ENCODE measurements at regions of chr4 and their contacts with region 1.

Region 1: DNA sequence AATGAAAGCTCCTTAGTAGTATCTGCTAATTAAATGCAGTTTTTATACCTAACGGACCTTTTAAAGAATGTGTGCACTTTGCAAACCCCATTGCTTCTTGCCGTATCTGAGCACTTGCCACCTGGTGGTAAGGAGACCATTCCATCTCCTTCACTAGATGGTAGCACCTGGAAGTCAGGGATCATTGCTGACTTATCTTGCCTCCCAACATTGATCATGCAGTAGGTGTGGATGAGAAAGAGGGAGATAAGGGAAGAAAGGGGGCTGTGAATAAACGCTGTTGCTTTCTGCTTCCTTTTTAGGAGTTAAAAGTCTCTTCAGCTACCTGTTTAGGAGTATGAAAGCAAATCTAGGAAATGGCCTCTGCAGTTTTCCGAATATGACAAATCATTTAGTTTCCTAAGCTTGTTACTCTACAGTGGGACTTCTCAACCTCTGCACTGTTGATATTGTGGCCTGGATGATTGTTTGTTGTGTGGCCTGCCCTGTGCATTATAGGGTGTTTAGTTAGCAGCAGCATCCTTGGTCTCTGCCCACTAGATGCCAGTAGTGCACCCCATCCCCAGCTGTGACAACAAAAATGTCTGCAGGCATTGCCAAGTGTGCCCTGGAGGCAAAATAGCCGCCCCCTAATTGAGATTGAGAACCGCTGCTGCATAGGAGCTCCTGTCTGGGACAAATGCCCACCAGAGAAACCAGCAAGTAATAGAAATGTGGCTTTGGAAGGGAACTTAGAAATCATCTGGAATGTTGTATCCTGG is 38.8 kb downstream of the GAB1 start:
- DNase-seq: peak; percentile 64
- ATAC-seq: peak; percentile 76
- H3K4me3 ChIP-seq: no peak overlapping the region
- H3K4me3 Mint-ChIP-seq: peak overlapping the region; percentile 32
- H3K27ac ChIP-seq: no peak overlapping the region
- H3K27ac Mint-ChIP-seq: peak overlapping the region; percentile 54
- H3K4me1 ChIP-seq: peaks cover 47 to 58% of the 10 kb centered on the region in 2 donors
- H3K4me1 Mint-ChIP-seq: peaks cover 61% of the 10 kb centered on the region
- H3K27me3 ChIP-seq: no peaks in the 10 kb centered on the region
- H3K27me3 Mint-ChIP-seq: no peaks in the 10 kb centered on the region
- CTCF ChIP-seq: peak; percentile 56

Region 2: DNA sequence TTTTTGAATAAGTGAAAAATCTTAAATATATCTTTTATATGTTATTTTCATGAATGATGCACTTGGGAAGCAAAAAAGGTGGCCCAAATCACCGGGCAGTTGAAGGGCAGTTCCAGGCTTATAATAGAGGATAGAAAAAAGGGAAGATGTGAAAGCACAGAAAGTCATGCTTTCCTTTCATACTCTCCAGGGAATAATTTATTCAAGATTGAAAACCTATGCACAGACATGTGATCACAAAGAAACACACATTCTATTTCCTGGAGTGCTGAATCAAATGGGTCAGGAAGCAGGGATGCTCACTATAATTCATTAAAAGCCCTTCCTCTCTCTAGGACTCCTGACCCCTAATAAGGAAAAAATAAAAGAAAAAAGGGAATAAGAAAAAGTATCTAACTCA is 256.8 kb before region 1 on chr4:
- CTCF ChIA-PET with region 1: no interaction called
- POLR2A ChIA-PET with region 1: no interaction called
- intact Hi-C with region 1: no loop called
- DNase-seq: no peak
- ATAC-seq: no peak
- H3K4me3 ChIP-seq: no peak overlapping the region
- H3K4me3 Mint-ChIP-seq: no peak overlapping the region
- H3K27ac ChIP-seq: no peak overlapping the region
- H3K27ac Mint-ChIP-seq: no peak overlapping the region
- H3K4me1 ChIP-seq: no peaks in the 10 kb centered on the region
- H3K4me1 Mint-ChIP-seq: no peaks in the 10 kb centered on the region
- H3K27me3 ChIP-seq: no peaks in the 10 kb centered on the region
- H3K27me3 Mint-ChIP-seq: peaks cover 4% of the 10 kb centered on the region
- CTCF ChIP-seq: no peak

Region 3: DNA sequence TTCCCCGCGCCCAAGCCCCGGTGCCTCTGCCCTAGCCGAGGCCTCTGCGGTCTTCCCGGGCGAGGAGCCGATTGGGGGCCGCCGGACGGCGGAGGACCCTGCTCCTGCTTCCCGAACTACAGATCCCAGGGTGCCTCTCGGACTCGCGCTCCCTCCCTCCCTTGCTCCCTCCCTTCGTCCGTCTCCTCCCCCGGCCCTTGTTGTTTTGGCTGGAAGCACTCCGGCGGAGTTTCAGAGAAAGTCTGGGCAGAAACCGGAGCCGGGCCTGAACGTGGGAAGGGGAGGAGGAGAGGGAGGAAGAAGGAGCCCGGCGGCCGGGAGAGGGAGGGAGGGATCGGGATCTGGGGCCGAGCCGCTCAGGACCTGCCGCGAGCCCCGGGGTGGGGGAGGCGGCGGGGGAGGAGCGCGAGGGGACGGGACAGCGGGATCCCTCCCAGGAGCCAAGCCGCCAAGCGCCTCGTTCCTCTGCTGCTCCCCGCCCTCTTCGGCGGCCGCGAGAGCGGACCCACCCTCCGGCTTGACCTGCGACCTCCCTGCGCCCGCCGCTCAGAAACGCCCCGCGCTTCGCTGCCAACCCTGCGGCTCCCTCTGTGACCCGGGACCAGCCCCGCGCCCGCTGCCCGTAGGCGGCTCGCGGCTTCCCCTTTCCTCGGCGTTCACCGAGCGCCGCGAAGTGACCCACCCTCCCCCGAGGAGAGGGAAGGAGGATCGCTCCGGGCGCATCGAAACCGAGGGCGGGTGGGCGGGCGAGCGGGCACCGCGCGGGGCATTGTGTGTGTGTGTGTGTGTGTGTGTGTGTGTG is 39.3 kb before region 1 on chr4:
- CTCF ChIA-PET with region 1: interaction called, 7 read pairs
- POLR2A ChIA-PET with region 1: interaction called, 6 read pairs
- intact Hi-C with region 1: loop called (anchors 5 kb)
- DNase-seq: peak; percentile 69
- ATAC-seq: peak; percentile 56
- H3K4me3 ChIP-seq: peak overlapping the region; percentile 42 to 86 (median 73)
- H3K4me3 Mint-ChIP-seq: peak overlapping the region; percentile 96
- H3K27ac ChIP-seq: peak overlapping the region; percentile 46 to 76
- H3K27ac Mint-ChIP-seq: peak overlapping the region; percentile 87
- H3K4me1 ChIP-seq: peaks cover 12 to 17% of the 10 kb centered on the region in 2 donors
- H3K4me1 Mint-ChIP-seq: peaks cover 24% of the 10 kb centered on the region
- H3K27me3 ChIP-seq: peaks cover 0 to 9% (median 0%) of the 10 kb centered on the region in 4 experiments
- H3K27me3 Mint-ChIP-seq: peaks cover 23% of the 10 kb centered on the region
- CTCF ChIP-seq: no peak

Region 4: GRCh38 chr4:143358923-143359643 is 16.4 kb before region 1 on chr4:
- CTCF ChIA-PET with region 1: interaction called, 22 read pairs
- POLR2A ChIA-PET with region 1: no interaction called
- intact Hi-C with region 1: loop called (anchors 2 kb)
- DNase-seq: peak; percentile 81
- ATAC-seq: peak; percentile 88
- H3K4me3 ChIP-seq: peak overlapping the region; percentile 2 to 43 (median 25)
- H3K4me3 Mint-ChIP-seq: peak overlapping the region; percentile 76
- H3K27ac ChIP-seq: peak overlapping the region; percentile 78 to 90
- H3K27ac Mint-ChIP-seq: peak overlapping the region; percentile 83
- H3K4me1 ChIP-seq: peaks cover 35 to 52% of the 10 kb centered on the region in 2 donors
- H3K4me1 Mint-ChIP-seq: peaks cover 51% of the 10 kb centered on the region
- H3K27me3 ChIP-seq: no peaks in the 10 kb centered on the region
- H3K27me3 Mint-ChIP-seq: no peaks in the 10 kb centered on the region
- CTCF ChIP-seq: no peak

Region 5: DNA sequence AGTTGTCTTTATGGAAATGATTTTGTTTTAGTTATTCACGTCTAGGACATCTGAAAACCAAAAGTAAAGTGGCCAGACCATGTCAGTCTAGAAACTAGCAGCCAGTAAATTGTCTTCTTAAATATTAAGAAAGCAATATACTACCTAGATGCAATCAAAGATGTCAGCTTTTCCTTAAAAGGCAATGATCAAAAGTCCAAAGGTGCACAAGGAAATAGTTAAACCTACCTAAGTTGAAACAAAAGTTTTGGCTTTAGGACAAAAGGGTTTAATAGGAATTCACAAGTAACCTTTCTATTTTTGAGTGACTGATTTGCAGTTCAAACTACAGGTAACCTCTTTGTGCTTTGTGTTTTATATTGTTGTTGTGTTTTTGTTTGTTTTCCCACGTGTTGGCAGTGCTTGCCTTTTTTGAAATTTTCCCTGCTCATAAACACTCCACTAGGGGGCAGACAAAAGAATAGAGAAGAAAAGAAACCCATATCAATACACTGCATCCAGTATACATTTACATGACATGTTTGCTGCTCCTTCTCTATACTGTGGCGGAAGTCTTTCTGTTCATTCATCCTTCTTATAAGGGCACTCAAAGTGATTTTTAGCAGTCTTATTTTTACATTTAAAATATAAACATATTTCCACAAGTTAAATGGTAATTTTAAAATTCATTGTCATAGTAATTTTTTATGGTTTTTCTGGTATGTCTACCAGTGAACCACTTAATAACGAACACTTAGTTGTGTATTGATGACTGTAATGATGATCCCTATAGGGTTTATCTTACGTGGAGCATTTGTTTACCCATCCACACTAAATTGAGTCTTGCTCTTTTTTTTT is 23.8 kb after region 1 on chr4:
- CTCF ChIA-PET with region 1: interaction called, 21 read pairs
- POLR2A ChIA-PET with region 1: no interaction called
- intact Hi-C with region 1: loop called (anchors 2 kb)
- DNase-seq: peak; percentile 60
- ATAC-seq: peak; percentile 43
- H3K4me3 ChIP-seq: no peak overlapping the region
- H3K4me3 Mint-ChIP-seq: no peak overlapping the region
- H3K27ac ChIP-seq: no peak overlapping the region
- H3K27ac Mint-ChIP-seq: no peak overlapping the region
- H3K4me1 ChIP-seq: peaks cover 15 to 23% of the 10 kb centered on the region in 2 donors
- H3K4me1 Mint-ChIP-seq: peaks cover 23% of the 10 kb centered on the region
- H3K27me3 ChIP-seq: no peaks in the 10 kb centered on the region
- H3K27me3 Mint-ChIP-seq: peaks cover 6% of the 10 kb centered on the region
- CTCF ChIP-seq: peak; percentile 81

Region 6: GRCh38 chr4:143482840-143483239 is 107.3 kb after region 1 on chr4:
- CTCF ChIA-PET with region 1: interaction called, 22 read pairs
- POLR2A ChIA-PET with region 1: no interaction called
- intact Hi-C with region 1: loop called (anchors 1 kb)
- DNase-seq: peak; percentile 60
- ATAC-seq: no peak
- H3K4me3 ChIP-seq: no peak overlapping the region
- H3K4me3 Mint-ChIP-seq: no peak overlapping the region
- H3K27ac ChIP-seq: no peak overlapping the region
- H3K27ac Mint-ChIP-seq: no peak overlapping the region
- H3K4me1 ChIP-seq: no peaks in the 10 kb centered on the region
- H3K4me1 Mint-ChIP-seq: no peaks in the 10 kb centered on the region
- H3K27me3 ChIP-seq: no peaks in the 10 kb centered on the region
- H3K27me3 Mint-ChIP-seq: peaks cover 10% of the 10 kb centered on the region
- CTCF ChIP-seq: peak; percentile 78